ENCODE measurements at regions of chr17 and their contacts with region 1.

Region 1: DNA sequence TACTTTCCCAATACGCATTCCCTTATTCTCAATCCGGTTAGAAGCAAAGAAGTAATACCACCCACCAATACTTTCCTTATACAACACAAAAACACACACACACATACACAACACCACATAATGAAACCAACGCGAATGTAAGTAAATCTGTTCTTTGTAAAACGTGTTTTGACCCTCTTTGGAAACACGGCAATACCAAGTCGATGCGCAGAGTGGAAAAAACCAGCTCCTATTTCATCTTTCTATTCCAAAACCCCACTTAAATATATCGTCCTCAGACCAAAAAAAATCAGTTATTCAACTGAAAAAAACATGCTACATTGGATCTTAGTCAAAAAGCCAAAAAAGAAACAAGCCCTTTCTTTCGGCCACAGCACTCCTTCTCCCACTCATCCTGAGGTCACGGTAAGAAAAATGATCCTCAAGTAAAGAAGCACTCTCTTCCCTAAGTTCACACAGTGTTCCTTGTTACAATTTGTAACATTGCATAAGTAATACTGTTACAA is 31.0 kb upstream of the ARL4D start:
- DNase-seq: peak in 1 of 2 experiments; percentile 60
- H3K4me3 ChIP-seq: peak overlapping the region in 2 of 4 experiments; percentile 43 to 59; a peak in 5 of 8 replicates
- H3K27ac ChIP-seq: peak overlapping the region; percentile 99
- H3K4me1 ChIP-seq: peaks cover 5 to 12% (median 8%) of the 10 kb centered on the region in 4 experiments
- H3K27me3 ChIP-seq: no peaks in the 10 kb centered on the region; a peak in 1 of 7 replicates
- CTCF ChIP-seq: no peak
- EP300 ChIP-seq: no peak; a peak in 1 of 3 replicates
- POLR2A ChIP-seq: peak; percentile 99 to 100
- RAD21 ChIP-seq: 0 out of 4 replicates have a peak, but pooled peaks of 1 of the 2 experiments have one; percentile 1

Region 2: GRCh38 chr17:43309505-43310332 is 58.1 kb before region 1 on chr17:
- CTCF ChIA-PET with region 1: no interaction called
- POLR2A ChIA-PET with region 1: interaction called, 65 read pairs
- DNase-seq: peak in 1 of 2 experiments; percentile 46
- H3K4me3 ChIP-seq: no peak overlapping the region
- H3K27ac ChIP-seq: no peak overlapping the region
- H3K4me1 ChIP-seq: peaks cover 0 to 4% (median 0%) of the 10 kb centered on the region in 4 experiments; a peak in 1 of 7 replicates
- H3K27me3 ChIP-seq: no peaks in the 10 kb centered on the region
- CTCF ChIP-seq: no peak
- EP300 ChIP-seq: no peak
- POLR2A ChIP-seq: no peak
- RAD21 ChIP-seq: no peak

Region 3: DNA sequence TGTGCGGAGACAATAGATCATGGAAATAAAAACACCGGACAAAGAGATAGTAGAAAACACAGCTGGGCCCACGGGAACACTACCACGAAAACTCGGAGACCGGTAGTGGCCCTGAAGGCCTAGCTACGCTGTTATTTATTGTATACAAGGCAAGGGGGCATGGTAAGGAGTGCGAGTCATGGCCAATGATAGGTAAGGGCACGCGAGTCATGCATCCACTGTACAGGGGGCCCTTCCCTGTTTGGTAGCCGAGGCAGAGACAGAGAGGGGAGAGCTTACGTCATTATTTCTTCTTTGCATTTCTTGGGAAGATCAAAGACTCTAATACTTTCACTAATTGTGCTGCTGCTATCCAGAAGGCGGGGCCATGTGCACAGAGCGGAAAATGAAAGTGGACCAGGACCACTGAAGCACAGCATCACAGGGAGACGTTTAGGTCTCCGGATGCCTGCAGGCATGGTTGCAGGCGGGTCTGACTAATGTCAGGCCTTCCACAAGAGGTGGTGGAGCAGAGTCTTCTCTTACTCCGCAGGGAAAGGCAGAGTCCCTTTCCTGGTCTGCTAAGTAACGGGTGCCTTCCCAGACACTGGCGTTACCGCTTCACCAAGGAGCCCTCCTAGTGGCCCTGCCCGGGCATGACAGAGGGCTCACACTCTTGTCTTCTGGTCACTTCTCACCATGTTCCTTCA is 43.4 kb before region 1 on chr17:
- CTCF ChIA-PET with region 1: no interaction called
- POLR2A ChIA-PET with region 1: interaction called, 22 read pairs
- DNase-seq: no peak
- H3K4me3 ChIP-seq: no peak overlapping the region
- H3K27ac ChIP-seq: no peak overlapping the region
- H3K4me1 ChIP-seq: peaks cover 0 to 3% (median 0%) of the 10 kb centered on the region in 4 experiments; a peak in 2 of 7 replicates
- H3K27me3 ChIP-seq: no peaks in the 10 kb centered on the region
- CTCF ChIP-seq: peak; percentile 29 to 47 (median 43)
- EP300 ChIP-seq: no peak
- POLR2A ChIP-seq: no peak
- RAD21 ChIP-seq: peak; percentile 6 to 22; a peak in 2 of 4 replicates

Region 4: GRCh38 chr17:43338886-43339516 is 28.8 kb before region 1 on chr17:
- CTCF ChIA-PET with region 1: interaction called, 6 read pairs
- POLR2A ChIA-PET with region 1: interaction called, 39 read pairs
- DNase-seq: peak in 1 of 2 experiments; percentile 77
- H3K4me3 ChIP-seq: no peak overlapping the region
- H3K27ac ChIP-seq: no peak overlapping the region
- H3K4me1 ChIP-seq: peaks cover 6 to 7% (median 6%) of the 10 kb centered on the region in 4 experiments; a peak in 6 of 7 replicates
- H3K27me3 ChIP-seq: no peaks in the 10 kb centered on the region
- CTCF ChIP-seq: peak; percentile 62 to 66 (median 64)
- EP300 ChIP-seq: no peak
- POLR2A ChIP-seq: no peak
- RAD21 ChIP-seq: peak; percentile 70 to 71

Region 5: DNA sequence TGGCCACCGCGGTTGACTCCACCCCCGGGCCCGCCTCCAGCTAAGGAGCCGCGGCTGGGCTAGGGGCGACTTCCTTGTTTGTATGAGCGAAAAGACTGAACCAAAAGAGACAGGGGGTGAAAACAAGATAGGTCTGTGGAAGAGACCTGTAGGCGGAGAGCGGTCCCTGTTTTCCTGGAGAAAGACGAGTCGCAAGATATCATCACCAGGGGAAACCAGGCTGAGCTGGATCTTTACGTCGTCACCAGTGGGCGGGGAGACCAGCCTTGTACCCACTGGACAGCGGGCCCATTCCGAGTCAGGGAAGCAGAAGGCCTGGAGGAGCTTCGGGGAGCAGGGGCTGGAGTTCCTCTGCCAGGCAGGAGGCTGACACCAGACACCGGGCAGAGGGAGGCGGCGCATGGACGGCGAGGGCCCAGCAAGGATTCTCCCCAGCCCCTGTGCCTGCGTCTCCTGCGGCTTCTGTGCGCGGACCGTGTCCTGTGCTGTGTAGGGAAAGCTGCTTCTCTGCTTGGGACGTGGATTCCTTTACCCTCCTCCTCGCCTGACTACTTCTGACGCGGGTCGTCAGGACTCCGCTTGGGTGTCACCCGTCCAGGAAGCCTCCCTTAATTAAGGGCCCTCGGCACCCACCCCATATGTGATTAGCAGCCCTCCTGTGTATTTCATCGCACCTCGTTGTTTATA is 20.7 kb after region 1 on chr17:
- CTCF ChIA-PET with region 1: interaction called, 22 read pairs
- POLR2A ChIA-PET with region 1: interaction called, 184 read pairs
- DNase-seq: peak in 1 of 2 experiments; percentile 93
- H3K4me3 ChIP-seq: peak overlapping the region; percentile 58 to 81 (median 70)
- H3K27ac ChIP-seq: peak overlapping the region; percentile 85
- H3K4me1 ChIP-seq: peaks cover 0 to 3% (median 0%) of the 10 kb centered on the region in 4 experiments; a peak in 3 of 7 replicates
- H3K27me3 ChIP-seq: no peaks in the 10 kb centered on the region
- CTCF ChIP-seq: no peak
- EP300 ChIP-seq: peak in 1 of 2 experiments; percentile 55; a peak in 1 of 3 replicates
- POLR2A ChIP-seq: peak in 1 of 2 experiments; percentile 61; a peak in 1 of 3 replicates
- RAD21 ChIP-seq: no peak

Region 6: DNA sequence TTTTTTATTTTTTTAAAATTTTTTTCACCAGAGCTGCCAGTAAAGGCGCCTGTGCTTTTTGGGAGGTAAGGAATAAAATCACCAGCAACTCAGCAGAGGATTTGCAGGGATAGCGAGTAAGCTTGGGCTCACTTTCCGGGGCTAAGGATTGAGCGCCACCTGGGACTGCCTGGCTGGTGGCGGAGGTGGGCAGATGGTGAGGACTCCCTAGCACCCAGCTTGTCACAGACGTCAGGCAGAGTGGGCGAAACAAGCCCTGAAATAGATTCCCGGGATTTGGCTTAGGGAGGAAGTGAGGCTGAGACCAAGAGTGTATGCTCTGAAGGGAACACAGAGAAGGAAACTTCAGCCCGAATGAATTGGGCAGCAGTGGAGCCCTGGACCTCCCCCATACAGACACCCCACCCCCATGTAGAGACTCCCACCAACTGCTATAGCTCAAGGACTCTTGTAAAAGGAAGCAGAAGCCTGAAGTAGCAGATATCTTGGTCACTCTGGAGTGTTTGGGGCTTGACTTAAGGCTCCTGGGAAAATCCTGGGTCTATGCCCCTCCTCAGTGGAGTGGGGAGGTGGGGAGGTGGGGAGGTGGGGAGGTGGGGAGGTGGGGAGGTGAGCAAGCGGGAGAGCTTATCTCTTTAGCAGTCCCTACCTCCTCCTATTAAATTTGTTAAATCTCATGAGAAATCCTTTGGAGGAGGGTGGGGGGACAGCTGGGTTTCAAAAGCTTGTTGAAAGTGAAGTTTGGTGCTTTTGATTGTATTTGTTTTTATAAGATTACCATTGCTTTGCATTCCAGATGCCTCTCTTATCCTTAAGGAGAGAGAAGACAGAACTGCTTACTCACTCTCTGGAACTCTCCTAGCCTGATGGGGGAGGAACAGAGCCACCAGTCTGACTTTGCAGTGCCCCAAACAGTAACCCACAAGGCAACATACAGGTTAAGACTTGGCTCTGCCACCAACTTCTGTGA is 39.2 kb after region 1 on chr17:
- CTCF ChIA-PET with region 1: interaction called, 5 read pairs
- POLR2A ChIA-PET with region 1: interaction called, 184 read pairs
- DNase-seq: no peak
- H3K4me3 ChIP-seq: no peak overlapping the region
- H3K27ac ChIP-seq: no peak overlapping the region
- H3K4me1 ChIP-seq: peaks cover 0 to 6% (median 2%) of the 10 kb centered on the region in 4 experiments; a peak in 3 of 7 replicates
- H3K27me3 ChIP-seq: no peaks in the 10 kb centered on the region
- CTCF ChIP-seq: no peak
- EP300 ChIP-seq: no peak
- POLR2A ChIP-seq: no peak
- RAD21 ChIP-seq: no peak

Region 7: GRCh38 chr17:43439041-43439440 is 71.3 kb after region 1 on chr17:
- CTCF ChIA-PET with region 1: no interaction called
- POLR2A ChIA-PET with region 1: interaction called, 10 read pairs
- DNase-seq: no peak
- H3K4me3 ChIP-seq: no peak overlapping the region
- H3K27ac ChIP-seq: no peak overlapping the region
- H3K4me1 ChIP-seq: peaks cover 0 to 2% (median 0%) of the 10 kb centered on the region in 4 experiments; a peak in 3 of 7 replicates
- H3K27me3 ChIP-seq: no peaks in the 10 kb centered on the region
- CTCF ChIP-seq: no peak
- EP300 ChIP-seq: no peak
- POLR2A ChIP-seq: no peak
- RAD21 ChIP-seq: no peak